Activated CD4-positive, alpha-beta T cell treated with anti-CD3 and anti-CD28 coated beads for 36 hours (primary cell): ENCODE measurements at regions of chr2 and their contacts with region 1.

Region 1: DNA sequence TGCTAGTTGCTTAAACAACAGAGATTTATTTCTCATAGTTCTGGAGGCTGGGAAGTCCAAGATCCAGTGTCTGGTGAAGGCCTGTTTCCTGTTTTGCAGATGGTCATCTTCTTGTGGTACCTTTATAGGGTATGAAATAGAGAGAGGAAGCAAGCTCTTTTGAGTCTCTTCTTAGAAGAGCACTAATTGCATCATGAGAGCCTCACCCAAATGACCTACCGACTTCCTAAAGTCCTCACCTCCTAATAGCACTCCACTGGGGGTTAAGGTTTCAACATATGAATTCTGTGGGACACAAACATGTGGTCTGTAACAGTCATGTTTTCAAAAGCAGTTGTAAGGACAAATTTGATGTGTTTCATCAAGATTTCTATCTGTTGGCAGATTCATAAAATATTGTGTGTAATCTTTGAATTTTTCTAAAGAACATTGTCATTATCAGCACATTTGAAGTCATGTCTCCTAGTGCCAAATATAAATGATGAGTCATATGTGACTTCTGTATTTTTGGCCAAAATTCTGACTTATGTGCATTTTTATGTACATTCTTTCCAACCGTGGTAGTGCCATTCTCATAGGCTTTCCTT is 45.3 kb downstream of the CD28 start:
- DNase-seq: no peak
- ATAC-seq: no peak
- H3K4me3 Mint-ChIP-seq: no peak overlapping the region
- H3K27ac Mint-ChIP-seq: peak overlapping the region; percentile 77
- H3K4me1 Mint-ChIP-seq: peaks cover 67% of the 10 kb centered on the region
- H3K27me3 Mint-ChIP-seq: no peaks in the 10 kb centered on the region

Region 2: GRCh38 chr2:203718087-203718486 is 33.7 kb before region 1 on chr2:
- CTCF ChIA-PET with region 1: interaction called, 20 read pairs
- POLR2A ChIA-PET with region 1: interaction called, 9 read pairs
- intact Hi-C with region 1: no loop called
- DNase-seq: peak; percentile 77
- ATAC-seq: peak; percentile 63
- H3K4me3 Mint-ChIP-seq: peak overlapping the region; percentile 63
- H3K27ac Mint-ChIP-seq: peak overlapping the region; percentile 95
- H3K4me1 Mint-ChIP-seq: peaks cover 97% of the 10 kb centered on the region
- H3K27me3 Mint-ChIP-seq: no peaks in the 10 kb centered on the region